HCT116 (cell line): ENCODE measurements at regions of chr6 and their contacts with region 1.

Region 1: DNA sequence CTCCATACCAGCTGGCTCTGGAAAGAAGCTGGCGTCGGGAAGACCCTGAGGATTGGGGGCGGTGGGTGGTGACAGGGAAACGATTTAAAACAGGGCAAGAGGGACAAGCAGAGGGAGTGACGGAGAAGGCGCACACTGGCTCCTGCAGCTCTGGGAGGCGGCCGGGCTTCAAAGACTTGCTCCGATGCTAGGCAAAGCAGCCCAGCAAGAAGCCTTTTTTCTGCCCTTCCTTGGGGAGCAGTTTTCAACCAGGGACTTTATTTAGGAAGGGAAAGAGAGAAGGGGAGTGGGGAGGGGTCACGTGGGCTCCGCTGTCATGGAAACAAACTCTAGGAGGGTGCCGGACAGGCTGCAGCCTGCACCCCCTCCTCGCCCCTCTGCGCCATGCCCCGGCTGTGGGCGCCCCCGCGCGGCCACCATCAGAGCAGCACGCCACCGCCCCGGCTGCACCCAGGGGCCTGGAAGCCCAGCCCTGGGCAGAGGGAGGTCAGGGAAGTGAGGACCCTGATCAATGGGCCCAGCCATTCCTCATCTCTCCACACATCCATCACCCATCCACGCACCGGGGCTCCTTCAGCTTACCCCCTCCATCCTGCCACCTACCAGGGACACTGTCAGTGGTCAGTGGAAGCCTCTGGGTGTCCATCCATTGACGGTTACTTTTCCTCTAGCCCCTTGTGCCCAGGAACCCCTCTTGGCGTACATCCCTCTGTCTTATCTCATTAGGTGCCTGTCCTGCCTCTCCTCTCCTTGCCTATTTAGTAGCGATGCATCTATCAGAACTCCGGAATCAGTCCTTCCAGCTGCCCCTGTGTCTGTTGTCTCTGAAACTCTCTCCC is 66.6 kb upstream of the CCDC167 start:
- DNase-seq: no peak
- ATAC-seq: peak; percentile 97
- H3K4me3 ChIP-seq: no peak overlapping the region
- H3K27ac ChIP-seq: no peak overlapping the region
- H3K4me1 ChIP-seq: peaks cover 0 to 7% of the 10 kb centered on the region in 2 experiments; a peak in 1 of 4 replicates
- H3K27me3 ChIP-seq: no peaks in the 10 kb centered on the region
- CTCF ChIP-seq: peak; percentile 84 to 94 (median 89)
- POLR2A ChIP-seq: no peak
- RAD21 ChIP-seq: peak; percentile 94

Region 2: GRCh38 chr6:37381579-37381978 is 184.8 kb before region 1 on chr6:
- CTCF ChIA-PET with region 1: no interaction called
- POLR2A ChIA-PET with region 1: no interaction called
- RAD21 ChIA-PET with region 1: no interaction called
- intact Hi-C with region 1: loop called (anchors 2 kb)
- DNase-seq: peak; percentile 74
- ATAC-seq: peak; percentile 91
- H3K4me3 ChIP-seq: no peak overlapping the region
- H3K27ac ChIP-seq: no peak overlapping the region
- H3K4me1 ChIP-seq: no peaks in the 10 kb centered on the region
- H3K27me3 ChIP-seq: no peaks in the 10 kb centered on the region
- CTCF ChIP-seq: peak; percentile 73 to 81 (median 77)
- POLR2A ChIP-seq: no peak
- RAD21 ChIP-seq: peak; percentile 72

Region 3: GRCh38 chr6:37483917-37484785 is 82.2 kb before region 1 on chr6:
- CTCF ChIA-PET with region 1: interaction called, 3 read pairs
- POLR2A ChIA-PET with region 1: no interaction called
- RAD21 ChIA-PET with region 1: no interaction called
- intact Hi-C with region 1: loop called (anchors 1 kb)
- DNase-seq: no peak
- ATAC-seq: peak; percentile 92
- H3K4me3 ChIP-seq: no peak overlapping the region
- H3K27ac ChIP-seq: no peak overlapping the region
- H3K4me1 ChIP-seq: no peaks in the 10 kb centered on the region
- H3K27me3 ChIP-seq: no peaks in the 10 kb centered on the region
- CTCF ChIP-seq: peak; percentile 69 to 90 (median 75); a peak in 5 of 6 replicates
- POLR2A ChIP-seq: no peak
- RAD21 ChIP-seq: peak; percentile 90

Region 4: DNA sequence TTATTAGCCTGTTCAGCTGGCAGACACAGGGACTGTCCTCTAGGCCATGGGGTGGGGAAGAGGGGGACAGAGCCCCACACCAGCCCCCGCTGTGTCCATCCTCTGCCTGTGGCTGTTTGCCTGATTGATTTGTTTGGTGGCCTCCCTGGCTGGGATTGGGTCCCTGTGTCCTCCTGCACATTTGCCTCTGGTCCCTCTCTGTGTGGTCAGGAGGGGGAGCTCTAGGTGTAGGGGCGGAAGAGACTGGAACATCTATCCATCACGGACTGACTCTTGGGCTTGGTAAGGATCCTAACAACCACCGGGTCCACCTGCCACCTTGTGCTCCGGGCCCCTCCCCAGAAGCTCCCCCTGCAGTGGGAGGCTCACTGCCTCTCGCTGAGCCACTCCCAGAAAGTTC is 28.2 kb before region 1 on chr6:
- CTCF ChIA-PET with region 1: interaction called, 8 read pairs
- POLR2A ChIA-PET with region 1: no interaction called
- RAD21 ChIA-PET with region 1: no interaction called
- intact Hi-C with region 1: loop called (anchors 1 kb)
- DNase-seq: peak; percentile 45
- ATAC-seq: peak; percentile 98
- H3K4me3 ChIP-seq: no peak overlapping the region
- H3K27ac ChIP-seq: no peak overlapping the region
- H3K4me1 ChIP-seq: peaks cover 0 to 9% of the 10 kb centered on the region in 2 experiments; a peak in 2 of 4 replicates
- H3K27me3 ChIP-seq: peaks cover 7% of the 10 kb centered on the region; the same call in 1 of the 2 replicates
- CTCF ChIP-seq: peak; percentile 74 to 88 (median 82)
- POLR2A ChIP-seq: no peak
- RAD21 ChIP-seq: peak; percentile 98